GM10248 (cell line): ENCODE measurements at regions of chr17 and their contacts with region 1.

Region 1: DNA sequence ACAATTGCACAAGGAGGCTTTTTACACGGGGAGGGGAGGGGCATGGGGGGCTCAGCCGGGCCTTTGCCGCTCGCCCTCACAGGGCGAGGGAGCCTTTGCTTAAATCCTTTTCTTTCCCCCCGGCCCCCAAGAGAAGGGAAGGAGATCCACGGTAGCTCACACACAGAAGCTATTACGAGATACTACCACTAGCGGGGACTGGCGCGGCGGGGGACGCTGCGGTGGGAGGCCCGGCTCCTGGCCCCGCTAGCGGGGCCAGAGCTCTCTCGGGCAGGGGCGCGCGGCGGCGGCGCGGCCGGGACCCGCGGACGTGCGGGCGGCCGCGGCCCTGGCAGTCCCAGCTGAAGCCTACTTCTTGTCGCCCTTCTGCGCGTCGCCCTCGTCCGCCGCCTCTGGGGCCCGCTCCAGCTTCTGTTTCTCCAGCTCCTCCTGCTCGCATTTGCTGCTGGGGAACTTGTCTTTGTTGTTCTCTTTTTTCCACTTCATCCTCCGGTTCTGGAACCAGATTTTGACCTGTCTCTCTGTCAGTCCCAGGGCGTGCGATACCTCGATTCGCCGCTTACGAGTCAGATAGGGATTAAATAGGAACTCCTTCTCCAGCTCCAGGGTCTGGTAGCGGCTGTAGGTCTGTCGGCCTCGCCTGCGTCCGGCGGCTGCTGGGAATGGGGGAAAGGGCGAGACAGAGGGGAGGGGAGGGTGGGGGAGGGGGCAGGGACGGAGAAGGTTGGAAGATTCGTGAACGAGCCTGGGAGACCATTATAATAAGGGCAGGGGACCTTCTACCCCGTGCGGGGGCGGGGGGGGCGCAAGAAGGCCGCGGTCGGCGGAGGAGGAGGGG is 2.0 kb downstream of the HOXB8 start:
- DNase-seq: peak; percentile 69
- CTCF ChIP-seq: no peak

Region 2: DNA sequence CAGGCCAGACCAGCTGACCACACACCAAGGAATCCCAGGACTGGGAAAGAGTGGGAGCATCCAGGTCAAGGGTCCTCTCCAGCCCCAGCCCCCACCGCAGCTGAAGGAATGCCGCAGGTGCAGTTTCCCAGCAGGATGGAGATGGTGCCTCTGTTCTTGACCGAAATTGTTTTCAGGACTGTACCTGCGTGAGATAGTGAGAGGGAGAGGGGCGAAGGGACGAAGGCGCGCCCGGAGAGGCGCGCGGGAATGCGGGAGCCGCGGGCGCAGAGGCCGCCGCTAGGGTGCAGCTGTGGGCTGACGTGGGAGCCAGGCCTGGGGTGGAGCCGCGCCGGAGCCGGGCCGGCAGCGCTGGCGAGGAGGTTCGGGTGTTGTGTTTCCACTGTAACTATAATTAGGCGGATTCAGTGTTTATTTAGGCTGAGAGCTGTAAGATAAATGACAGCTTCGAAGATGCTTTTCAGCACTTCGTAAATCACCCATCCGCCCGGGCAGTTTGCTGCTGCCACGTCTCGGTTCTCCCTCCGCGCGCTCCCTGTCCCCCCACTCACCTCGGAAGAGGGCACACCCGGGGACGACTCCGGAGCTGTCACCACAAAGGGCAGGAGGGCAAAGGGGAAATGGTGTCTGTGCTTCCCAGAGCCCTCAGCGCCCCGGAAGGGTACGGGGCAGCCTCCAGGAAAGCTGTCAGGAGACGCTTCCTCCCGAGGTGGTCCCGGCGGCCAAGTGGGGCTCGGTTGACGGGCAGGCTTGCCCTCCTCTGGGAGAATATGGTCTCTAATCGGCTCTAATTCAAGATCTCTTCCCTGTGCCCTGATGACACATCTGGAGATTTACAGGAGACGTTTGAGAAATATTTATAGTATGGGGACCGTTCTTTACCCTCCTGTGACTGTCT is 120.4 kb before region 1 on chr17:
- CTCF ChIA-PET with region 1: no interaction called
- POLR2A ChIA-PET with region 1: no interaction called
- DNase-seq: peak; percentile 83
- CTCF ChIP-seq: peak; percentile 90

Region 3: DNA sequence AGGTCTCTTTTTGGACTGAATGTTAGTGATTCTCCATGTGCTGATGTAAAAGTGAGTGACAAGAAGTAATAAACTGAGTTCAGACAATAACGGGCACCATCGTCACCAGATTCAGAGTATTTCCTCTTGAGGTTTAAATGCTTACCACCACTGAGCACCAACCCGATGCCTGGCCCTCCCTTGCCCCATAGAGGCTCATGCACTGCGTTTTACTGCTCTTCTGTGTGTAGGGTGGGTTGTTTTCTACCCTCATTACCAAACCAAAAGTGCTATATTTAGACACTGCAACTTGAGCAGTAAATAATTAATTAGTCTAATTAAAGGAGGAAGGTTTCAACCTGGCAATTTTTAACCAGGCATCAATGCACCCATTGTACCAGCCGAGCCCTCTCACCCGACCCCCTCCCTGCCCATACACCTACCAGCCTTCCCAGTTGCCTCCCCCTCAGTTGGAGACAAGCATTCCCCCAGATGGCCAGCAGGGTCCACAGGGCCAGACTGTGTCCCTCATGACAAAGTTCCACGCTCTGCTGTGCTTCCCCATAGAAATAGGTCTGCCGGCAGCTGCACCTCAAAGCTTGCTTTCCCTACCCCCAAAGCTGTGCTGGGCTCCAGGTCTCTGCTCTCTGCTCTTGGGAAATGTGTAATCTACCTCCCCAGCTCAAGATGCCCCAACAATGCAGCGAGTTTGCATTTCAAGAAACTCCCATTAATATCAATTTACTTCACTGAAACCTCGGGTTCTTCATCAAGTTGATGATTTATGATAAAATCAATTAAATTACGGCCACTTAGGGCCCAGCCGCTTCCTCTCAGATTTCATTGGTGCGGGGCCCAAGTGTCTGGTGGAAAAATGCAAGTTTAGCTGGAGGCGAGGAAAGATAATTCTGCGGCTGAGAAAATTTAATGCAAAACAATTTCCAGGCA is 50.9 kb before region 1 on chr17:
- CTCF ChIA-PET with region 1: no interaction called
- POLR2A ChIA-PET with region 1: no interaction called
- DNase-seq: no peak
- CTCF ChIP-seq: no peak

Region 4: DNA sequence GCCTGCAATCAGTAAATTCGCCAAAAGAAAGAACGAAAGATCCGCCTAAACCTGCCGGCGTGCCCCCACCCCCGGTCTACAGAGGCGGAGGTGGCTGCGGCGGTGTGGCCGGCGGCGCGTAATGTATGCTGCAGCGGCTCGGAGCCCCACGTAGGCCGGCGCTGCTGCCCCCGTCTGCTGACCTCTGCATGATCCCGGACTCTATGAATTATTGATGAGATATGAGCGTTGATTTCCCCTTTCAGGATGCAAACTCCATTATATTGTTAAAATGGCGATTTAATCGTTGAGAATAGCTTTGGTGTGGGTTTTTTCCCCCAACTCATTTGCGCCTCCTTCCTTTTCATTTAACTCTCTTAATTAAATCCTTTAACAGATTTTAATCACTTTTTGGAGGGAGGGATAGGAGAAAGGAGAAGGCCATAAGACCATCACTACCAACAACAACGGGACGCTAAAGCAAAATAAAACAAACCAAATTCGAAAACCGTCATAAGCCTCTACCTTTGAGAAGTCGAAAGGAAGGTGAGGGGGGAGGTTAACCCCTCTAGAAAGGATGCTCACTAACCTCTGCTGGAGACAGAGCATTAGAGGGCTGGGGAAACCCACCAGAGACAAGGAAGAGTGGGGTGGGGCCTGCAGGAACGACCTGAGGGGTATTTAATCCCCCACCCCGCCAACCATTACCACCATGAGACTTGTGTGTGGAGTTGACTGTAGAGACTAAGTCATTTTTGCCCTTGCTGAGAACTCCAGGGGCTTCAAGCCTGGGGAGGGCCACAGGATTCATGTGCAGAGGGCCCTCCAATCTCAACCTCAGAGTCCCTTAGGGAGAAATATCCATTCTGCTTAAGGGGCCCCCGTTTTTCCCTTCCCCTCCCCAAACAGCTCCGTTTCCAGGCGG is 26.5 kb before region 1 on chr17:
- CTCF ChIA-PET with region 1: interaction called, 15 read pairs
- POLR2A ChIA-PET with region 1: no interaction called
- DNase-seq: peak; percentile 74
- CTCF ChIP-seq: no peak

Region 5: GRCh38 chr17:48738803-48739526 is 125.9 kb after region 1 on chr17:
- CTCF ChIA-PET with region 1: no interaction called
- POLR2A ChIA-PET with region 1: no interaction called
- DNase-seq: peak; percentile 26
- CTCF ChIP-seq: no peak

Region 6: GRCh38 chr17:48970224-48970623 is 357.2 kb after region 1 on chr17:
- CTCF ChIA-PET with region 1: no interaction called
- POLR2A ChIA-PET with region 1: no interaction called
- DNase-seq: no peak
- CTCF ChIP-seq: no peak